Cardiac septum (tissue), 1 donor: ENCODE measurements at regions of chr19 and their contacts with region 1.

Region 1: GRCh38 chr19:46860125-46860845 is 512 bp upstream of the ARHGAP35 start:
- DNase-seq: peak; percentile 98

Region 2: GRCh38 chr19:46913852-46914430 is 53.7 kb after region 1 on chr19:
- intact Hi-C with region 1: loop called (anchors 5 kb)
- DNase-seq: no peak

Region 3: DNA sequence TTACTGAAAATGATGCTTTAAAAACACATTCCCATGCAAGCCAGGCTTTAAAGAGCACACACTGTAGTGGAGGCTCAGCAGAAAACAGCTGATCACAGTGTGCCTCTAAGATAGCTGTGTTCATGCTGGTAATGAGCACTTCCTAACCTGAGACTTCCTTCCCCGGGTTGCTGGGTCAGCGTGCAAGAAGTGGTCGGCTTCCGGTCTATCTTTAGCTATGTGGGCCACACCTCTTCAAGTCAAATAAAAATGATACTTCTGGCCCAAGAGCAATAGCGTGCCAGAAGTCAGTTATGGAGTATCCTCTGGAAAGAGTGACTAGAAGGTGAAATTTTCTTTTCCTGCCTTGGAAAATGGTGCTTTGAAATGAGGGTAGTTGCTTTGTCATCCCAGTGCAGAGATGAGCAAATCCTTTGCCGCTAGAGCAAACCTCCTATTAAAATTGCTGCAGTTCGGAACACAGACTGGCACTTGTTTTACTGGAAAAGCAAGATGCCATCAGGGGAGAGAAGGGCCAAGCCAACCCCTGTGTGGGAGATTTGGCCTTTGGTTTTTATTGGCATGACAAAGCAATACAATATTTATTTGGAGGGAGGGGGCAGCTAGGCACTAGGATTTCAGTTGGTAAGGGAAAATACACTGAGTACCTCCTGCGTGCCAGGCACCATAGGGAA is 64.7 kb after region 1 on chr19:
- intact Hi-C with region 1: loop called (anchors 5 kb)
- DNase-seq: no peak

Region 4: DNA sequence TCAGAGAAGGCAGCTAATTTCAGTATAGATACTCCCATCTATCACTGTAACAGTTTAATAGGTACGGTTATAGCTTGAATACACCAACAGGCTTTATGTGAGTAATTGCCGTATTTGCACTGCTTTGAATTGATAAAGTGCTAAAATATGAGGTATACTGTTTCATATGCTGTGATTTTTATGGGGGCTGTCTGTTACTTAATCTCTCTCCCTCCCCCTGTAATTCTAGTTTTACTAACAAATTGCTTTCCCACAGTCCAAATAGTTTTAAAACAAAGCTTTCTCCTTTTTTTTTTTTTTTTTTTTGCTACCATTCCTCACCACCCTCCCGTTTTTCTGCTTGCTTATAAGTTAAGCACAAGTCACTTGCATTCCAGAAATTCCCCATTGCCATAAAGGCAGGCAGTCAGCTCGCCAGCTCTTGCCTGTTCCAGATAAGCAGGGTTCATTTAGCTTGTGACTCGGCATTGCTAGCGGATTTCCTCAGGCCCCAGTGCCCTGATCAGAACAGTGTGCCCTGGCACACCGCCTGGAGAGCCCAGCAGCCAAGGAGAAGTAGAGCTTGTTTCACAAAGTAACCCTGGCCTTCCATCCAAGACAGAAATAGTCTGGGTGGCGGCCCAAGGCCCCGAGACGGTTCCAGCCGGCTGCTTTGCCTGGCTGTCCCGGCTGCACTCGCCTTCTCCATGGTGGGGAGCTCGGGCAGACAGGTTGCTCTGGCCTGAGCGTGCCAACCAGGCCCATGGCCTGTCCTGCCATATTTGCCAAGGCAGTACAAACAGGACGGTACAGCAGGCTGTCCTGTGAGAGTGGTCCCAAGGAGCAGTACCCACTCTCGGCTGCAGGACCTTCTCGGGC is 115.9 kb after region 1 on chr19:
- intact Hi-C with region 1: loop called (anchors 5 kb)
- DNase-seq: peak; percentile 92

Region 5: DNA sequence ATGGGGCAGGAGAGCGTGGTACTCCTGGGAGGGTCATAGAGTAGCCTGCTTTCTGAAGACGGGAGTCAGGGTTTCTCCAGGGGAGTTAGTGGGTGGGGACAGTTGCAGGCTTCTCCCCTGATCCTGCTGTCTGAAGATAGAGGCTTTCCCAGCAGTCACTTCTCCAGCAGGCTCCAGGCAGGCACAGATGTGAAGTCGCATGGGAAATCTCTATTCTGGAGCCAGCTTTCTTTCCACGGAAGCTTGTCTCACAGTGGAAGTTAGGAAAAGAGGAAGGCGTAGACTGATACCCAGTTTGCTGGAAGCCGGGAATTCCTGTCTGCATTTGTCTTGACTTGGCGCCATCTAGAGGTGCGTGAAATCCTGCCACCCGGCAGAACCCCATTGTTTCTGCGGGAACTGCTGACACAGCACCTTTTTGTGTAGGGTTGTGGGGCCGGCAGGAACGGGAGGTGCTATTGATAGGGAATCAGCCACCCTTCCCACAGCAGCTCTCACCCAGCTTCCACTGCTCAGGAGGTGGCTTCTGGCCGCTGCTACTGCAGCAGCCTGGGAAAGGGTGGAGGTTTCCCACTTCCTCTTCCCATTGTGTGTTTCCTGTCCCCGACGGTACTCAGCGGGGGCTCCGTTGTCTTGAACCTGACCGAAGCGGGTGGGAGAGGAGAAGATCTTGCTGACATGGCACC is 130.8 kb after region 1 on chr19:
- intact Hi-C with region 1: loop called (anchors 2 kb)
- DNase-seq: peak; percentile 90

Region 6: GRCh38 chr19:47112997-47113849 is 252.9 kb after region 1 on chr19 and contains the start of gene ZC3H4:
- intact Hi-C with region 1: loop called (anchors 5 kb)
- DNase-seq: peak; percentile 100
- total RNA-seq, gene ZC3H4: 28.1 TPM

Region 7: GRCh38 chr19:47231215-47231984 is 371.1 kb after region 1 on chr19:
- intact Hi-C with region 1: no loop called
- DNase-seq: peak; percentile 95